Right ventricle myocardium superior (tissue), 1 donor: ENCODE measurements at regions of chr6 and their contacts with region 1.

Region 1: DNA sequence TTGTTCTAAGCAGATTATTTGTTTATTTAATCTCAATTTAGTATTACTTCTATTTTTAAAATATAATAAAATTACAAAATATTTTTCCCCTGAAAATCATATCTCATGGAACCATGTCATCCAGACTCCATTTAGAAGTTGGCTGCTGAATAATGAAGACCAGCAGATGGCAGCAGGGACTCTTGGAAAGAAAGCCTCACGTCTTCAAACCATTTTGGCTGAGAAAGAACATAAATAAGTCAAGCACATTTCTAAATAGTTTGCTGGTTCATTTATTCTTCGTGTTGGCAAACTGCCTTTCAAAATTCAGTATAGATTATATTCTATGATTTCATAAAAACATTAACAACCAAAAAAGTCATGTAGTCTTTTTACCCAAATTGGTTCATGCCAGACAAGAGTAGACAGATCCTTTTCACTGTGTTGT is 71.7 kb downstream of the RCAN2 start:
- DNase-seq: no peak
- ATAC-seq: peak; percentile 42

Region 2: GRCh38 chr6:45930420-45931040 is 489.1 kb before region 1 on chr6:
- intact Hi-C with region 1: loop called (anchors 10 kb)
- DNase-seq: peak; percentile 77
- ATAC-seq: peak; percentile 85

Region 3: DNA sequence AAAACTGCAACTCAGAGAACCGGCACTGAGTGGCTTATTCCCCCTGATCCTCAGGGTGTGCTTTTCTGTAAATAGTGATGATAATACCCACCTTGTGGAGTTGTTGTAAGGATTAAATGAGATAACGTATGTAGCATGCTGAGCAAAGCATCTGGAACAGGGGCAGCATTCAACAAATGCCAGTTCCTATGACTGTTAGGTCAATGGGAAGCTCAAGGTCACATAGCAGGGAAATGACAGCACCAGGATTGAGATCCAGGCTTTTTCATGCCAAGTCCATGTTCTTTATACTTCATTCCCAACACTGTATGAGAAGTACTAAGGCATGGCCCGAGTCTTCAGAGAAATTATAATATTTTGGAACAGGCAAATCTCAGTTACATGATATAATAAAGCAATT is 66.6 kb after region 1 on chr6:
- intact Hi-C with region 1: loop called (anchors 5 kb)
- DNase-seq: no peak
- ATAC-seq: peak; percentile 41

Region 4: DNA sequence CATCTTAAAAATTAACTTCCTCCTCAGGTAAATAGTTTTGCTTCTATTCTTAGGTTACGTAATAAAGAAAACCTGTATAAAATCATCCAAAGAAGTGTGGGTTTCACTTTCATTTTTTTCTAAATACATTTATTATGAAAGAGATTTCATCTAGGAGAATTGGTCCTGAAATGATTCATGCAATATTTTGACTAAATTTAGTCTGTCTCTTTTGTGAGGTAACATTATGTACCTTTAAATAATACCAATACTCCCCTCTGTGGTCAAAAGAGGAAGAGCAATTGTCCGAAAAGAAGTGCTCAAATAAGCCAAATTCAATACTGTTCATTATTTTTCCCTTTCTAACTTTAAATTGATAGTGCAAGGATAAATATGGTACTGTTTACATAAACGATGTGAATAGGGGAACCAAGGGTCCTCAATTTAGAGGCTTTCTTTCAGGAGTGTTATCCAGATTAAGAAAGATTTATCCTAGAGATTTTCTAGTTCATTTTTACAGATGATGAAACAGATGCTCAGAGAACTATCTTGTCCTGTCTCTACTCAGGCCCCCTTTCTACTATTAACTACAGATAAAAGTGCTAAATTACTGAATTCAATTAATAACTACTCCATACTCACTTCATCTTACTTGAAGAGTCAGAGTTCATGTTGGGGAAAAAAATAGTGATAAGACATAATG is 206.8 kb after region 1 on chr6:
- intact Hi-C with region 1: loop called (anchors 5 kb)
- DNase-seq: no peak
- ATAC-seq: peak; percentile 68

Region 5: DNA sequence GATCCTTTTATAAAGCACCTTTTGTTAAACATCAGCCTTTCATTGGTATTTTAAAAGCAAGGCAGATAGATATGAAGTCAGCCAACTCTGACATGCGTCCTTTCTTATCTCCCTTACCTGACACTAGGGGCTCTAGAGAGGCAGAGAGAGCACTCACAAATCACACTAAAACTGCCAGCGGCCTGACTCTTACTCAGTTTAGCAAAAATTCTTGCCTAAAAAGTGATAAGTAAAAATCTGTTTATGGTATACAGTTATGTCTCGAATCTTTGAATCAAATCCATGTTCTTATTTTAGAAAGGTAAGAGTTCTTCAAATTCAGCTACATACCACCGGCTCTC is 257.7 kb after region 1 on chr6:
- intact Hi-C with region 1: no loop called
- DNase-seq: no peak
- ATAC-seq: no peak

Region 6: GRCh38 chr6:46781478-46782378 is 362.1 kb after region 1 on chr6:
- intact Hi-C with region 1: loop called (anchors 5 kb)
- DNase-seq: no peak
- ATAC-seq: no peak